Aorta (tissue), 5 donors: ENCODE measurements at regions of chr1 and their contacts with region 1.

Region 1: DNA sequence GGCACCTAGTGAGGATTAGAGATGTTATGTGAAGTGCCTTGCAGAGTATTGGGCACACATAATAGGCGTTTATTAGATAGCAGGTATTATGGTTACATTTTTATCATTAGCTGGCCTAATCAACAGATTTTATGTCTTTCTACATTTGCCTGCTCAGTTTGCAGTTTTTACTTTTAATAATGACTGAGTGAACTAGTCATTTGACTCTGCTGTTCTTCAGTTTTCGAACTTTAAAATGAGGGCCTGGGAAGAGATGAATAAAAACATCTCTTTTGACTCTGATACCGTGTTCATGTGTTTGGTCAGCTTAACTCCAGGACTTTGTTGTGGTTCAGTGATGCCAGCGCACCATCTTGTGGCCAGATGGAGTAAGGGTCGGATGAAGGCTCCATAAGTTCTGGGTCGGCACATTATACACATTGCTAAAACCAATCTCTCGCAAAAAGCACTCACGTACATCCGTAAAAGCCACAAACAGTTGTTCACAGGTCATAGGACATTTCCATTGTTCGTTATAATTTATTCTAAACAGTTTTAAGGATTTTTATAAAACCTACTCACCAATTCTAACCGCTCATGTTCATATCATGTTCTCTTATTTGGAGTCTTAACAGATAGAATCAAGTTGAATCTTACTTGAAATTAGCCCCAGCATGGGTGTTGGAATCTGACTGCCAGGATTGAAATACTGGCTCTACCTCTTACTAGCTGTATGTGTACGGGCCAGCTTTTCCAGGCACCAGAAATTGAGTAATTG is 78.4 kb upstream of the GPR88 start:
- DNase-seq: peak; percentile 72 to 87
- ATAC-seq: peak; percentile 88
- H3K4me3 ChIP-seq: no peak overlapping the region
- H3K27ac ChIP-seq: no peak overlapping the region
- H3K4me1 ChIP-seq: no peaks in the 10 kb centered on the region
- H3K27me3 ChIP-seq: no peaks in the 10 kb centered on the region

Region 2: GRCh38 chr1:99808391-99809115 is 651.0 kb before region 1 on chr1:
- intact Hi-C with region 1: loop called (anchors 5 to 10 kb)
- DNase-seq: no peak
- ATAC-seq: peak; percentile 90
- H3K4me3 ChIP-seq: peak overlapping the region; percentile 26 to 40
- H3K27ac ChIP-seq: no peak overlapping the region
- H3K4me1 ChIP-seq: no peaks in the 10 kb centered on the region
- H3K27me3 ChIP-seq: no peaks in the 10 kb centered on the region

Region 3: DNA sequence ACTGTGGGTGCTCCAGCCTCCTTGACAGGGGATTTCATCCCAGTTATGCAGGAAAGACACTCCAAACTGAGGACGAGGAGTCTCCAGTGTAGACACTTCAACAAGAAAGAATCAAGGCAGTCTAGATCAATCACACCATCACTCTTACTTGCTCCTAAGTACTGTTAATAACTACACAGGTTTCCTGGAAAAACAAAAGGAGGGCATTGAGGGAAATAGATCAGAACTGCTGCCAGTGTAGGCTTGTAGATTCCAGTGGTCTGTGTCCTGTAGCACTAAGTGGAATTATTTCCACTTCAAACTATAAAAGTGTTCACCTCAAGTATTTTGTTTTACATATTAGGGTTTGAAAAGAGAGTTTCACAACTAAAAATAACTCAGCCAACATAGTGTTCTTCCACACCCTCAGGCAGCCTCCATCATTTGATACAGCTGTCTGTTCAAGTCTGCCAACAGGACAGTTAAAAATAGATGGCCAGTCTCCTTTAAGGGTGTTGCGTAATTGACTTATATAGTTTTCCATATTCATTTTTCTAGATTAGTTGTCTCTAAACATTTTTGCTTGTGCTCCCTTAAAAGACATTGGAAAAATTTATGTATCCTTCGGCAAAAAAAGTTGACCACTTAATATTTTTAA is 641.4 kb before region 1 on chr1:
- intact Hi-C with region 1: loop called in 1 of 2 experiments (anchors 10 kb)
- DNase-seq: no peak
- ATAC-seq: no peak
- H3K4me3 ChIP-seq: no peak overlapping the region
- H3K27ac ChIP-seq: no peak overlapping the region
- H3K4me1 ChIP-seq: no peaks in the 10 kb centered on the region
- H3K27me3 ChIP-seq: peaks cover 0 to 1% of the 10 kb centered on the region in 2 donors

Region 4: GRCh38 chr1:100360790-100361510 is 98.6 kb before region 1 on chr1:
- intact Hi-C with region 1: no loop called
- DNase-seq: no peak
- ATAC-seq: peak; percentile 69
- H3K4me3 ChIP-seq: no peak overlapping the region
- H3K27ac ChIP-seq: no peak overlapping the region
- H3K4me1 ChIP-seq: peaks cover 0 to 2% of the 10 kb centered on the region in 2 donors
- H3K27me3 ChIP-seq: peaks cover 0 to 1% of the 10 kb centered on the region in 2 donors

Region 5: DNA sequence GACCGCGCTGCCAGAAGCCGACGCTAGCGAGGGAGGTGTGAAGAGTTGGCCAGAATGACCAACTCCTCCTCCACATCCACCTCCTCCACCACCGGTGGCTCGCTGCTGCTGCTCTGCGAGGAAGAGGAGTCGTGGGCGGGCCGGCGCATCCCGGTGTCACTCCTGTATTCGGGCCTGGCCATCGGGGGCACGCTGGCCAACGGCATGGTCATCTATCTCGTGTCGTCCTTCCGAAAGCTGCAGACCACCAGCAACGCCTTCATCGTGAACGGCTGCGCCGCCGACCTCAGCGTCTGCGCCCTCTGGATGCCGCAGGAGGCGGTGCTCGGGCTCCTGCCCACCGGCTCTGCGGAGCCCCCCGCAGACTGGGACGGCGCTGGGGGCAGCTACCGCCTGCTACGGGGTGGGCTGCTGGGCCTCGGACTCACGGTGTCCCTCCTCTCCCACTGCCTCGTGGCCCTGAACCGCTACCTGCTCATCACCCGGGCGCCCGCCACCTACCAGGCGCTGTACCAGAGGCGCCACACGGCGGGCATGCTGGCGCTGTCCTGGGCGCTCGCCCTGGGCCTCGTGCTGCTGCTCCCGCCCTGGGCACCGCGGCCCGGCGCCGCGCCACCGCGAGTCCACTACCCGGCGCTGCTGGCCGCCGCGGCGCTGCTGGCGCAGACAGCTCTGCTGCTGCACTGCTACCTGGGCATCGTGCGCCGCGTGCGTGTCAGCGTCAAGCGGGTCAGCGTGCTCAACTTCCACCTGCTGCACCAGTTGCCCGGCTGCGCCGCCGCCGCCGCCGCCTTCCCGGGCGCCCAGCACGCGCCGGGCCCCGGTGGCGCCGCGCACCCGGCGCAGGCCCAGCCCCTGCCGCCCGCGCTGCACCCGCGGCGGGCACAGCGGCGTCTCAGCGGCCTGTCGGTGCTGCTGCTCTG is 79.6 kb after region 1 on chr1:
- intact Hi-C with region 1: loop called in 1 of 2 experiments (anchors 5 kb)
- DNase-seq: peak; percentile 50 to 78
- ATAC-seq: peak; percentile 70
- H3K4me3 ChIP-seq: peak overlapping the region; percentile 2 to 30
- H3K27ac ChIP-seq: no peak overlapping the region
- H3K4me1 ChIP-seq: no peaks in the 10 kb centered on the region
- H3K27me3 ChIP-seq: no peaks in the 10 kb centered on the region

Region 6: DNA sequence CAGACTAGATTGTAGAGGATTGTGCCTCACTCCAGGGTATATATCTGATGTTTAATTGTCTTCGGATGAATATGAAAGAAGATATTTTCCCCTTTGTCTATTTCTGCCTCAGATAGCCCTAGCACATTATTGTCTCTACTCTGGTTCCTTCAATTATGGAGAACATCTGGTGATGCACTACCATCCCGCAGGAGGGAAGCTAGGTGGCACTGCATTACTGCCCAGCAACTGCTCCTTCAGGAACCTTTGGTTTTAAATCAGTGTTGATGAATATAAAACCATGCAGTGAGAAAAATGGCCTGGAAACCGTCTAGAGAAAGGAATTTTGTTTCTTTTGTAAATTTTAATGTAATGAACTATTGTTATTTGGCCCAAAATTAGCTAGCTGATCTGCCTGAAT is 146.9 kb after region 1 on chr1:
- intact Hi-C with region 1: loop called in 1 of 2 experiments (anchors 5 kb)
- DNase-seq: peak in 1 of 2 donors; percentile 69
- ATAC-seq: peak; percentile 80
- H3K4me3 ChIP-seq: no peak overlapping the region
- H3K27ac ChIP-seq: no peak overlapping the region
- H3K4me1 ChIP-seq: peaks cover 0 to 2% of the 10 kb centered on the region in 2 donors
- H3K27me3 ChIP-seq: no peaks in the 10 kb centered on the region

Region 7: GRCh38 chr1:100866041-100866900 is 406.7 kb after region 1 on chr1:
- intact Hi-C with region 1: loop called (anchors 2 to 5 kb)
- DNase-seq: no peak
- ATAC-seq: peak; percentile 64
- H3K4me3 ChIP-seq: no peak overlapping the region
- H3K27ac ChIP-seq: no peak overlapping the region
- H3K4me1 ChIP-seq: no peaks in the 10 kb centered on the region
- H3K27me3 ChIP-seq: no peaks in the 10 kb centered on the region